Activated naive CD4-positive, alpha-beta T cell treated with anti-CD3 and anti-CD28 coated beads, Interleukin-2, amount 10 ng/mL, durations not matched to agents 7 days and 5 days (primary cell): ENCODE measurements at regions of chr9 and their contacts with region 1.

Region 1: DNA sequence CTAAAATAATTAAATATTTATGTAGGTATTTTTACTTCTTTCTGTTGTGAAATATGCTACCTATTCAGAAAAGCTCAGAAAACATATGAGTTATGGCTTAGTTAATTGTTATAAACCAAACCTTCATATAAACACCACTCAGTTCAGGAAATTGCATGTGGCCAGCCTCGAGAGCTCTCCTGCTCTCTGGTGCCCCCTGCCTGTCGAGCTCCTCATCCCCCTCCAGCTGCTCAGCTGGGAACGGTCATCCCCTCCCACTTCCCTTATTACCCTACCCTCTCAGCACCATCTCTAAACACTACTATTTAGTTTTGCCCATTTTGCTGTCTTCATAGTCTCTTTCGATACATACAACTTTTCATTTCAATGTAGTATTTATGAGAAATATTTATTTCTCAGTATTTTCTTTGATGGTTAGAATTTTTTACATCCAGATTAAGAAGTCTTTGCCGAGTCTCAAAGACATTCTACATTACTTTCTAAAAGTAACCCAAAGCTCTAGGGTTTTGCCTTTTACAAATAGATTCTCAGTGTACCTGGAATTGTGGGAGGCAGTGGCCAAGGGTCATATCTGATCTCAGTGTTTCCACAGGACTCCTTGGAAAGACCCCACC is 51.2 kb upstream of the SEMA4D start:
- DNase-seq: peak; percentile 90
- H3K4me3 Mint-ChIP-seq: no peak overlapping the region
- H3K27ac Mint-ChIP-seq: peak overlapping the region; percentile 59
- H3K4me1 Mint-ChIP-seq: peaks cover 21% of the 10 kb centered on the region
- H3K27me3 Mint-ChIP-seq: peaks cover 32% of the 10 kb centered on the region

Region 2: DNA sequence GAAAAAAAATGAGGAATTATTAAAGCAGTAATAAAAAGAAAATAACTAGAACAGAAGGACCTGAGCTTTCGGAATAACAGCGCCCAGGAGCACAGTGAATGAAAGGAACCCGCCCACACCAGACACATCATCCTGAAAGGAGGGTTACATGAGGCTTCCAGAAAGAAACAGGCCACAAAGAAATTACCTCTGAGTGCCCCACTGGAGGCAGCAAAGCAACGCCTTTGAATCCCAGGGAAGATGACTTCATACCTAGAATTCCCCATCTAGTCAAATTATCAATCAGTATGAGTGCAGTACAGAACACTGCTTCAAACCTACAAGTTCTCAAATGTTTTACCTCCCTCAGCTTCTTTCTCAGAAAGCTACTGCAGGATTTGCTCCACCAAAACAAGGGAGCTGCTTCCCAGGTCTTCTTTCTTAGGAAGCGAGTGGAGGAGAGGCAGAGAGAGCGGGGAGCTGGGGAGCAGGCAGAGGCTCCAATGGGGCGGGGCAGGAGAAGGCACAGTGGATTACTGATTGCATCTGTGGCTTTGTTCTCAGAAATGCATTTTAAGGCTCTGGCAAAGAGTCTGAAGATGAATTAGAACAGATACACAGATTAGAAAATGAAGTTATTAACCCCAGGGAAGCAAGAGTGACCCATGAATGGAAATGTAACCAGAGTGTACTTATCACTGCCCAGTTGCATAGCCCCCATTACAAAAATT is 138.3 kb before region 1 on chr9:
- CTCF ChIA-PET with region 1: interaction called, 26 read pairs
- DNase-seq: peak; percentile 44
- H3K4me3 Mint-ChIP-seq: no peak overlapping the region
- H3K27ac Mint-ChIP-seq: peak overlapping the region; percentile 84
- H3K4me1 Mint-ChIP-seq: peaks cover 78% of the 10 kb centered on the region
- H3K27me3 Mint-ChIP-seq: no peaks in the 10 kb centered on the region

Region 3: GRCh38 chr9:89428901-89429890 is 119.9 kb before region 1 on chr9:
- CTCF ChIA-PET with region 1: interaction called, 59 read pairs
- DNase-seq: peak; percentile 72
- H3K4me3 Mint-ChIP-seq: no peak overlapping the region
- H3K27ac Mint-ChIP-seq: peak overlapping the region; percentile 75
- H3K4me1 Mint-ChIP-seq: peaks cover 70% of the 10 kb centered on the region
- H3K27me3 Mint-ChIP-seq: no peaks in the 10 kb centered on the region

Region 4: DNA sequence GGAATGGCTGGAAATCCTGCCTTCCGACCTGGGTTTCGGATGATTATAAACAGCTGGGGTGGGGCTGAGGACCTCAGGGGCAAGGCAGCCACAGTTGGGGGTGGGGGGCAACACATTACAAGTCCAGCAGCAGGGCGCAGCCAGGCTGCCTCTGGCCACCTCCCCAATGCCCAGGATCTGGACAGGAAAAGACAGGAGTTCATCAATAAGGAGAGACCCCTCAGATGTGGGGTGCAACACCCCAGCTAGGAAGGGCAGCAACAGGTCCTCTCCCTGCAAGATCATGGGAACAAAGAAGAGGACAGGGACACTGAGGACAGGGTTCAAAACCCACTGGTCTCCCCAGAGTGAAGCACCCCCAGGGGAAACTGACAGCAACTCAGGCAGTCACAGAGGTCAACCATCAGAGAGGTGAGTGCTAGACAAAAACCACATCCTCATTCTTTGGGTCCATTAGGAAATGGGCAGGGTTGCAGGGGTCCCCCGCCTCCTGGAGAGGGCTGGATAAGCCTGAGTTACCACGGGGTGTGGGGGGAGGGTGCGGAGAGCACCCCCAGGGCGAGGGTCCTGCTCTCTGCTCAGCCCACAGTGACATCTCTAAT is 84.7 kb before region 1 on chr9:
- CTCF ChIA-PET with region 1: interaction called, 11 read pairs
- DNase-seq: no peak
- H3K4me3 Mint-ChIP-seq: peak overlapping the region; percentile 69
- H3K27ac Mint-ChIP-seq: peak overlapping the region; percentile 83
- H3K4me1 Mint-ChIP-seq: peaks cover 98% of the 10 kb centered on the region
- H3K27me3 Mint-ChIP-seq: no peaks in the 10 kb centered on the region

Region 5: DNA sequence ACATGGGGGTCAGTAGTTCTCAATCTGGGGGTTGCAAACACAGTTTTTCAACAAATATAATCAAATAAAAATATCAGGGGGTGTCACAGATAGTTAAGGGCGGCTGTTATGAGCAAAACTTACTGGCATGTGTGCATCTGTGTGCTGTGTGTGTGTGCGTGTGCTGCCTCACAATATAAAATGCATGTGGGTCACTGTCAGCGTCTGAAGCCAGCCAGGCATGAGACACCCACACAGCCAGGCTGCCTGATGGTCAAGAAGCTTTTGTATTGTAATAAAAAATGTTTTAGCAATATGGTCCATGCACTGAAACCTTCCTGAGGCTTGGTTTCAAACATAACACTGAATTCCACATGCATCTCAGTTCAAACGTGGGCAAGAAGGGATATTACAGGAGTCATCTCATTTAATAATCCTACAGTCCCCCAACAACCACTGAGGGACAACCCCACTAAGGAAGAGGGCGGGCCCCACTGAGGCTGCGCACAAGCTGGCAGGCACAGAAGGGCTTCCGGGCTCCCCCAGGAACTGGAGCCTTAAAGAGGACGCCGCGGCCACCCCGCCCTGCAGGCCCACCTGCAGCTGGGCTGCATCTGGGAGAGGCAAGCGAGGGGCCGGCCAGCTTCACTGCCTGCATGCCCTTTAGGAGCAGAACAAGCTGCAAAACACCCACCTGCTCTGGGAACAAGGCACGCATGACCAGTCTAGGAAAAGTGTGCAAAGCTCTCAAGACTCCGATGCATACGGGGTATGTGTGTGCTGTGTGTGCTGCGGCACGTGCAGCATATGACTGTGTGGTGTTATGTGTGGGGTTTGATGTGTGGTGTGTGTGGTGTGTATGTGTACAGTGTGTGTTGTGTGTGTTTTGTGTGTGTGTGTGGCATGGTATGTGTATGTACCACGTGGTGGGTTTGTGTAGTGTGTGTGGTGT is 65.3 kb before region 1 on chr9:
- CTCF ChIA-PET with region 1: interaction called, 70 read pairs
- DNase-seq: peak; percentile 80
- H3K4me3 Mint-ChIP-seq: peak overlapping the region; percentile 81
- H3K27ac Mint-ChIP-seq: peak overlapping the region; percentile 88
- H3K4me1 Mint-ChIP-seq: peaks cover 89% of the 10 kb centered on the region
- H3K27me3 Mint-ChIP-seq: no peaks in the 10 kb centered on the region

Region 6: DNA sequence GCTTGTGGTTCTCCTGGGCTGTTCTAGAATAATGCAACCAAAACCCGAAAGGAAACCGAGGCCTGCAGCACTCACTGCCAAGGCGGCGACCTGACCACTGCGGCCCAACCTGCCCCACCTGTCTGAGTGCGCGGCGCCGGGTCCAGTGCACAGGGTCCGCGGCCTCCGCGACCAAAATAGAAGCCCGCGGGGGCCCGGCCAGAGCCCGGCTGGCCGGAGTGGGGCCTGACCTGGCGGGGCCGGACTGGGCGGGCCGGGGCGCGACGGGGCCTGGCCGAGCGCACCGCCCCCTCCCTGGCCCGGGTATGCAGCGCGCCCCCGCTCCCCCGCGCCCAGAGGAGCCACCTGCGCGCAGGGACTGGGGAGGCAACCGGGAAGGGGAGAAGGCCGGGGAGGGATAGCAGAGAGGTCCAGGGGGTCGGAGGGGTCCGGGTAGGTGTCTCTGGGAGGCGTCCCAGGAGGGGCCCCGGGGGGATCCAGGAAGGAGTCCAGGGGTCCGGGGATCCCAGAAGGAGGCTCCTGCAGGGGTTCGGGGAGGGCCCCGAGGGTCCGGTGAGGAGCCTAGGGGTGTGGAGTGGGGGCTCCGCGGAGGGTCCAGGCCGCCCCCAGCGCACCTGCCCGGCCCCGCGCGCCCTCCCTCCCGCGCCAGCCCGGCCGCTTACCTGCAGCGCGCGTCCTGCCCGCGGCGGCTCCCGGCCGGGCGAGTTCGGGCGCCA is 51.7 kb before region 1 on chr9:
- CTCF ChIA-PET with region 1: interaction called, 27 read pairs
- DNase-seq: peak; percentile 63
- H3K4me3 Mint-ChIP-seq: peak overlapping the region; percentile 98
- H3K27ac Mint-ChIP-seq: peak overlapping the region; percentile 90
- H3K4me1 Mint-ChIP-seq: peaks cover 90% of the 10 kb centered on the region
- H3K27me3 Mint-ChIP-seq: no peaks in the 10 kb centered on the region

Region 7: GRCh38 chr9:89529243-89530035 is 19.7 kb before region 1 on chr9:
- CTCF ChIA-PET with region 1: interaction called, 52 read pairs
- DNase-seq: peak; percentile 48
- H3K4me3 Mint-ChIP-seq: peak overlapping the region; percentile 9
- H3K27ac Mint-ChIP-seq: peak overlapping the region; percentile 83
- H3K4me1 Mint-ChIP-seq: peaks cover 99% of the 10 kb centered on the region
- H3K27me3 Mint-ChIP-seq: no peaks in the 10 kb centered on the region

Region 8: GRCh38 chr9:89592985-89593694 is 44.0 kb after region 1 on chr9:
- CTCF ChIA-PET with region 1: no interaction called
- DNase-seq: no peak
- H3K4me3 Mint-ChIP-seq: no peak overlapping the region
- H3K27ac Mint-ChIP-seq: no peak overlapping the region
- H3K4me1 Mint-ChIP-seq: no peaks in the 10 kb centered on the region
- H3K27me3 Mint-ChIP-seq: peaks cover 62% of the 10 kb centered on the region